RWPE1 (cell line): ENCODE measurements at regions of chr1 and their contacts with region 1.

Region 1: DNA sequence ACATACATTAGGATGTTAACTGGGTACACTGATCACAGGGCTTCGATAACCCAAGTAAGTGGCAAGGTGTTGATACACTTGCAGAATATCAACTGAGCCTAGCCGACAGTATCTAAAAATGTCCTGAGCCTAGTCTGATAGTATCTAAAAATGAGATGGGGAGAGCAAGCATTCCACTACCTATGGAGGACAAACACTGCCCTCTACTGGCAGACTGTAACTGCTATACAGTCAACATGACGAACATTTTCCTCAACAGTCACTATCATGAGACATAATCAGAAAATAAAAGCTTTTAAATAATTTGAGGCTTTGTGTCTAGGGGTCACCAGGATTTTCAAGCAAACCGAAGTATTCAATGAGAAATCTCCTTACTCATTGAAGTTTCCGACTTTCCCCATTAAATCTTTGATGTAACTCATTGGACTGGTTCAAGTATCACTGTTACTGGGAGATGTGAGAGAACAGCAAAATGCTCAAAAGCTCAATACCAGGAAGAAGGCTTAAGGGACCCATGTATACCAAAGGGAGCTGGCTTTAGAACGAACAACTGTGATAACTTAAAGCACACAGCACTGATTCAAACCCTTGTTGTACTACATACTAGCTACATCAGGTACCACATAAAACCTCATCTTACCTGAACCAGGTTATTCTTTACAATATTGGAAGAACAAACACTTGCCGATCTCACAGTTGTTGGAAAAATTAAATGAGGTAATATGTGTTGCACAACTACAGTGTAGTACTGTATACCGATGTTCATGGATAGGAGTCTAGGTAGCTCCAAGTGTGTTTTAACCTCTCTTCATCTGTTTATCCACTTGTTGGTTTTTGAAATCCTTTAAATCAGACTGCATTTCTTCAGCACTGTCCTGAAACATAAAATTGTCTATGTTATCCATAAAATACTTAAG is 31.1 kb upstream of the SLC45A3 start:
- DNase-seq: peak; percentile 74
- H3K27ac ChIP-seq: no peak overlapping the region
- CTCF ChIP-seq: peak; percentile 79

Region 2: GRCh38 chr1:205680073-205680851 is 31.1 kb before region 1 on chr1 and contains the start of gene SLC45A3:
- CTCF ChIA-PET with region 1: interaction called, 11 read pairs
- POLR2A ChIA-PET with region 1: interaction called, 3 read pairs
- DNase-seq: peak; percentile 55
- H3K27ac ChIP-seq: peak within 1 kb of the TSS; percentile 62
- CTCF ChIP-seq: no peak

Region 3: DNA sequence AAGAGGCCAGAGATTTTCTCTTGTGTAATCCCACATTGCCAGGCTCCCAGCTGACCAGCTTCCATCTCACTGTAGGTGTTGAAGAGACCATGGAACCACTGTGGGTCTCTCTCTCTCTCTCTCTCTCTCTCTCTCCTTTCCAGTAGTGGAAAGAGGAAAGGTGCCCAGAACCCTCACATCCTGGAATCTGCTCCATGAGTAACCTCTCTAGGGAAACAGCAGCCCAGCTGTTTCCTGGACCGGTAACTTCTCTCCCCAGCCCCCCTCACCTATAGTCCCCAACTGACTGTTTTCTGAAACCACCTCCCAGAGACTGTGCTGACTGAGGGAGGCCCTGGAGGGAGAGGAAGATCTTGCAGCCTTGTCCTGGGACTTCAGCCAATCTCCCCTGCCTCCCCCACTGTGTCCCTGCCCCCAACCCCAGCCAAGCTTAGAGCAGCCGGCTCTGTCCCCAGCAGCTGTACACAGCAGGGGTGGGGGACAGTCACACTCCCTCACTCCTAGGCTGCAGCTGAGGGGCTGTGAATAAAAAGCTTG is 10.4 kb before region 1 on chr1:
- CTCF ChIA-PET with region 1: interaction called, 16 read pairs
- POLR2A ChIA-PET with region 1: no interaction called
- DNase-seq: no peak
- H3K27ac ChIP-seq: 0 out of 2 replicates have a peak overlapping the region, but pooled peaks have one; percentile 3
- CTCF ChIP-seq: no peak